Calu3 (cell line): ENCODE measurements at regions of chr12 and their contacts with region 1.

Region 1: DNA sequence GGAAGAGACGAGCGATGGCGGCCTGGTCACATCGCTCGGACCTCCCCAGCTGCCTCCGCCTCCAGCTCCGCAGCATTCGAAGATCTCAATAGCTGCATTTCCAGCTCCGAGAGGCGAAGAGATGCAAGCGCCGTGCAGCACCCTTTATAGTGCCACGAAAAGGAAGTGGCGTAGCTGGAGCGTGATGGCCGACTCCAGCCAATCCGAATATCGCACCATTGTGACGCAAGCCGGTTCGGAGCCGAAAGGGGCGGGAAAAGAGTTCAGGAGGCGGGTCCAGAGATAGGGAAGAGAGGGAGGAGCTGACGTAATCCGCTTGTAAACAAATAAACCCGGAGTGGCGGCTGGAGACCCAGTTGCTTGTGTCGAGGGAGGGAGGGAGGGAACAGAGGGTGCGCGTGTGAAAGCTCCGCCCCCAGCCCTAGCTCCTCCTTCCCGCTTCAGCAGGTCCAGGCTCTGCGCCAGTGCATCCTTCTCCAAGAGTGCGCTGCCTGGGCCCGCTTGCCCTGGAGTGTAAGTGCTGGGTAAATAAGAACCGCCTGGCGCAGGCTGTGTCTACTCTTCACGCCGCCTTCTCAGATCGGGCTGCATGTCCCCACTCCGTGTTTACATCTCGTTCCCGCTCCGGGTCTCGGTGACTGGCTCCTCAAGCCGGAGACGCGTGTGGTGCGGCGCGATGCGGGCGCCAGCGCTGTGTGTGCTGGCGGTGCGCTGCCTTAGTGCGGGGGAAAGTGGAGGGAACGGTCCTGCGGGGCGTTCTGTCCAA is at the start of gene BTG1:
- DNase-seq: peak; percentile 99
- H3K4me3 Mint-ChIP-seq: peak within 1 kb of the TSS; percentile 87
- H3K27ac Mint-ChIP-seq: peak within 1 kb of the TSS; percentile 99
- H3K4me1 Mint-ChIP-seq: peaks cover 17% of the 10 kb centered on the region
- H3K27me3 Mint-ChIP-seq: peaks cover 10% of the 10 kb centered on the region
- CTCF ChIP-seq: no peak
- total RNA-seq, gene BTG1: 123 and 131 TPM in 2 replicates

Region 2: DNA sequence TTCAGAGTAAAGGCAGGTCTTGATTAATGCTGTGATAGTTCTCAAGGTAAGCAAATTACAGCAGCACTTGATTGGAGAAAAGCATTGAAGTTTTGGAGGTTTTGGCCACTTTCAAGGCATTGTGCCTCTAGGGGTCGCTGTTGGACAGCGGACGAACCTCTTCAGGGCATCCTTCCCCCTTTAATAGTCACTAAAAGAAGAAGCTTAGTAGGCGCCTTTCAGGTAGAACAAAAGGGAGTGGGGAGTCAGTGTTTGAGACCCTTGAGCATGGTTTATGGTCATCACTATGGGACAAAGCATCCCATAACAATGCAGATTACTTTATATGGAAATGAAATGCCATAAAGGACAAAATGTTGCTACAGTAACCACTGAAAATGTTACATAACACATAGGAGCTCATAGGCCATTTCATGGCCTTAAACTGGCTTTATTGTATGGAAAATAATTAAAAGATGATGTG is 763.8 kb before region 1 on chr12:
- CTCF ChIA-PET with region 1: interaction called, 32 read pairs
- intact Hi-C with region 1: loop called (anchors 2 kb)
- DNase-seq: peak; percentile 89
- H3K4me3 Mint-ChIP-seq: peak overlapping the region; percentile 48
- H3K27ac Mint-ChIP-seq: peak overlapping the region; percentile 64
- H3K4me1 Mint-ChIP-seq: peaks cover 15% of the 10 kb centered on the region
- H3K27me3 Mint-ChIP-seq: no peaks in the 10 kb centered on the region
- CTCF ChIP-seq: peak; percentile 87

Region 3: DNA sequence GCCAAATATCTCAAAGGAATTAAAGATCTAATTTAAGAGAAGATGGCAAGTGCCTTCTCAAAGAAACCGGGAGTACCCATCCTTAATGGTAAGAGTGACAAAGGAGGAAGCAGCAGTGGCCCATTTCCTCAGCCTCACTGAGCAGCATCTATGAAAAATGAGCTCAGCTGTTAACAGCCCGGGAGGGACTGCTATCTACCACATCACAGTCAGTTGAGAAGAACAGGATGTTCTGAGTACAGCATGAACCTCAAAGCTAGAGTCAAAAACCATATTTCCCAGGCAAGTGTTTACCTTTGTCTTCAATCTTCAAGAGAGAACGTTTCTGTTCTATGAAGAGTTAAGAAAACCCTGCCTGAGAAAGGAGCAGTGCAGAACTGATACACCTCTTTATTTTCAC is 115.3 kb before region 1 on chr12:
- CTCF ChIA-PET with region 1: no interaction called
- intact Hi-C with region 1: no loop called
- DNase-seq: no peak
- H3K4me3 Mint-ChIP-seq: no peak overlapping the region
- H3K27ac Mint-ChIP-seq: no peak overlapping the region
- H3K4me1 Mint-ChIP-seq: peaks cover 25% of the 10 kb centered on the region
- H3K27me3 Mint-ChIP-seq: no peaks in the 10 kb centered on the region
- CTCF ChIP-seq: no peak

Region 4: GRCh38 chr12:92208613-92209121 is 62.8 kb after region 1 on chr12:
- CTCF ChIA-PET with region 1: no interaction called
- intact Hi-C with region 1: loop called (anchors 1 kb)
- DNase-seq: no peak
- H3K4me3 Mint-ChIP-seq: peak overlapping the region; percentile 67
- H3K27ac Mint-ChIP-seq: peak overlapping the region; percentile 38
- H3K4me1 Mint-ChIP-seq: peaks cover 28% of the 10 kb centered on the region
- H3K27me3 Mint-ChIP-seq: no peaks in the 10 kb centered on the region
- CTCF ChIP-seq: no peak

Region 5: GRCh38 chr12:92270521-92270920 is 124.6 kb after region 1 on chr12:
- CTCF ChIA-PET with region 1: no interaction called
- intact Hi-C with region 1: no loop called
- DNase-seq: no peak
- H3K4me3 Mint-ChIP-seq: no peak overlapping the region
- H3K27ac Mint-ChIP-seq: no peak overlapping the region
- H3K4me1 Mint-ChIP-seq: peaks cover 5% of the 10 kb centered on the region
- H3K27me3 Mint-ChIP-seq: no peaks in the 10 kb centered on the region
- CTCF ChIP-seq: no peak

Region 6: GRCh38 chr12:92408072-92408900 is 262.4 kb after region 1 on chr12:
- CTCF ChIA-PET with region 1: no interaction called
- intact Hi-C with region 1: loop called (anchors 5 kb)
- DNase-seq: peak; percentile 66
- H3K4me3 Mint-ChIP-seq: no peak overlapping the region
- H3K27ac Mint-ChIP-seq: no peak overlapping the region
- H3K4me1 Mint-ChIP-seq: no peaks in the 10 kb centered on the region
- H3K27me3 Mint-ChIP-seq: no peaks in the 10 kb centered on the region
- CTCF ChIP-seq: peak; percentile 64

Region 7: DNA sequence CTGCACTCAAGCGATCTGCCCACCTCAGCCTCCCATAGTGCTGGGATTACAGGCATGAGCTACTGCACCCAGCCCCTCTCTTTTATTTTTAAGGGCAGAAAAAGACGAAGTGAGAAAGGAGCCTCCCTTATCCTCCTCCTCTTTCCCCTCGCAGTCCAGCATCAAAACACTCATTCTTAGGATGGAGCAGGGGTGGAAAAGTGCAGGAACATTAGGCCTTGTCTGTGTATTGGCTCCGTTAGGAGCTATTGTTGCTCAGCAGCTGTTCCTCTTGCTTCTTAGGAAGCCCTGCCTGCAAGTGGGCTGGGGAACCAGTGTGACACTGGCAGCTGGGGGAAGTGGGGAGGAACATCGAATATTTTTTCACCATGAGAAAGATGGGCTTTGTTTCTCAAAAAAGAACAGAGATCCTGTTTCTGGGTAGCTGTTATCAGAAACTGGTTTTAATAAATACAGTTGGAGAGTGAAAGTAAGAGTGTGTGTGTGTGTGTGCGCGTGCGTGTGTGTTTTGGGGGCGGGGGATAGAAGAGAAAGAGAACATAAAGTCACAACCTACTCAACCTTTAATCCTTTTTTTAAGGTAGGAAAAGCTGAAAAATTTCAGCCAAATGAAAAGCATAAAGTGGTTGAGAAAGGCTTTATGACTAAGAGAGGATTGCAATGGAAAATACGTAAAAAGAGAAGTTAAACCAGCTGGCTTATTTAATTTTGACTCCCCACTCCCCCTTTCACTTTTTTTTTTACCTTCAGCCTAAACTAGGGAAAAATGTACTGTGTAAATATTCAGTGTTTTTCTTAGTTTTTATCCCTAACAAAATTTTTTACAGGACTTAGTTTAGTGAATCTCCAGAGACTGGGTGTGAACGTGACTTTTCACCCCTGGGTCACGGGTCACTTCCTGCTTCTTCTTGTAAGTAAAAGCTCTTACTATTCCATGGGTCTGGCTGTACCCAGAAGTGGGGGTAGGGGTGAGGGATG is 359.6 kb after region 1 on chr12:
- CTCF ChIA-PET with region 1: interaction called, 4 read pairs
- intact Hi-C with region 1: loop called (anchors 2 kb)
- DNase-seq: peak; percentile 27
- H3K4me3 Mint-ChIP-seq: peak overlapping the region; percentile 53
- H3K27ac Mint-ChIP-seq: peak overlapping the region; percentile 62
- H3K4me1 Mint-ChIP-seq: peaks cover 48% of the 10 kb centered on the region
- H3K27me3 Mint-ChIP-seq: no peaks in the 10 kb centered on the region
- CTCF ChIP-seq: no peak

Region 8: DNA sequence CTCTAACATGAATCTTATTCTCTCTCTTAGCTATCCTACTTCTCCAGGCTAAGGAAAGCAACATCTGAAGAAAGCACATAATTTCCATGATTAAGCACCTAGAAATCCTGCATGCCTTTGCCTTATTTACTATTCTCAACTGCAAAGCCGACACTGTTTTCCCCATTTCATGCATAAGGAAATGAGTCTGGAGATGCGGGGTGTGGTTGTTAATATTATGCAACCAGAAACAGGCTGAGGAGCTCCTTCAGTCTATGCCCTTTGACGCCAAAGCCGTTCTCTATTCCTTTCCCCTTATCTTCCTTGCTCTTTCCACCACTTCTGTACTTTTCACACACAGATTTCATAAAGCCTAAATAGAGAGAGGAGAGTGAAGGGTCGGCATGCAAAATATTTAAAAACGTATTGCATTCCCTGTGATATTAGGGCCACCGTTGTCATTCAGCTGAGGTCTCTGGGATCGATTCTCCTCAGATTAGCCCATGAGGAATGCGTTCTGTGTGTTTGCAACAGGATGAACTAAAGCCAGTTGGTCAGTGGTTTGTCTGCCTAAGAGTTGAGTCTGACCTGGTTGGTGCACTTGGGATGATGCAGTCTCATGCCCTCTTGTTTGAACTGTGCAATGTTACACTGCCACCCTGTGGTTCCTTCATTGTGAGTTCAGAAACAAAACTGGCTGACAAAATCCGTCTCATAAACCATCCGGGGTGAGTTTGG is 503.8 kb after region 1 on chr12:
- CTCF ChIA-PET with region 1: interaction called, 4 read pairs
- intact Hi-C with region 1: loop called (anchors 1 kb)
- DNase-seq: peak; percentile 78
- H3K4me3 Mint-ChIP-seq: peak overlapping the region; percentile 54
- H3K27ac Mint-ChIP-seq: peak overlapping the region; percentile 71
- H3K4me1 Mint-ChIP-seq: peaks cover 47% of the 10 kb centered on the region
- H3K27me3 Mint-ChIP-seq: no peaks in the 10 kb centered on the region
- CTCF ChIP-seq: peak; percentile 63